Posterior vena cava (tissue), 2 donors: ENCODE measurements at regions of chr7 and their contacts with region 1.

Region 1: GRCh38 chr7:120987683-120988590 is 574 bp upstream of the CPED1 start:
- DNase-seq: peak; percentile 97

Region 2: DNA sequence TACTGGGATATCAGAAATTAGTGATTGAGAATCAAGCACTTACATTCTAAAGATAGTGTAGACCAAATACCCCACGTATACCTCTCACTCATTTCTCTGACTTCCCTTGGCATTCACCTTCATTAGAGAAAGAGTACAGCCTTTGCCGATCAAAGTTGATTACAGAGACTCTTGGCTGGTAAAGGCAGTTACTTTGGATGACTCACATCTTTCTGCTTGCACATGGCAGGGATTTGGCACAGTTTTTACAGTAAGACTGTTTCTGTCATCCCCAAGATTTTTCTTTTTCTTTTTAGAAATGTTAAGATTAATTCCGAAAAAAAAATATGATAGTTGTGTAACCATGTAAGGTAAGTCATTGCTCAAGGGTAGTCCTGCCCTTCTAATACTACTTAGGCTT is 273.0 kb before region 1 on chr7:
- intact Hi-C with region 1: no loop called
- DNase-seq: no peak

Region 3: DNA sequence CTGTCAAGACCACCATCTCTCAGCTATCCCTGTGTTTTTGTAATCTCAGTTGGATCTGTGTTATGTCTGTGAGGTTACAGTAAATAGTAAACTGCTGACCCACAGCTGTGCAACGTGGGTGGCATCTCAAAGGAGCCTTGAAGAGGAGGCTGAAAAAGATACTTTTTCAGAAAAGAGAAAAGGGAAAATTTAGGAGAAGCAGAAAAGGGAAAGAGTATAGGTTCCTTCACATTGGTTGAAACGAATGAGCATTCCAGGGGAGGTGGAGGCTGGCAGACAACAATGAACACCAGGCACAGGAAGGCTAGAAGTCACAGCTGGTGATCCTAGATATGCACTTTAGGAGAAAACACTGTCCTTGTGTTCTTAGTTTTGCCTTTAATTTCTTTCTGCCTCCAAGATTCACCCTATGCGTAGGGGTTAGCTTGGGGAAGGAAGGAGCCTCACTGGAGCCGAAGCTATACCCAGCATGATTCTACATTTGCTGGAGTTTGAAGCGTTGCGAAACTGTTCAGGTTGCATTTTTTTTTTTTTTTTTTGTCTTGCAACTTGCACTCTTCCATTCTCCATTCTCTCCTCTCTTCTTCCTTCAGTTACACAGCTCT is 18.9 kb after region 1 on chr7:
- intact Hi-C with region 1: loop called in 1 of 2 experiments (anchors 1 kb)
- DNase-seq: no peak

Region 4: DNA sequence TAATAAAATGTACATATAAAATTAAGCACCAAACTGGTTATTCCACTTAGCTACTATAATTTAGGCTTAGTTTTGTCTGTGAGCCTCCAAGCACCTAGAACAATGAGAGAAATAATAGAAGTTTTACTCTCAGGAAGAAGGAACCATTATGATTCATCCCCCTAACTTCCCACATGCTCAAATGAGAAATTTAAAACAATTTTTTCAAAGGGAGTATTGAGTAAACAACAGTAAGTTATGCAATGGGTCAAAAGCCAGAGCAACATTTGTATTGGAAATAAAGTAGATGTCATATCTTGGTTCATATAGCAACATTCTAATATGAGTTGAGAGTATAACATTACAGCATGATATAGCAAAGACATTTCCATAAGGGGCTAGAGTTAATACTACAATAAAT is 32.7 kb after region 1 on chr7:
- intact Hi-C with region 1: no loop called
- DNase-seq: no peak

Region 5: GRCh38 chr7:121081327-121081936 is 93.5 kb after region 1 on chr7:
- intact Hi-C with region 1: loop called (anchors 2 to 5 kb)
- DNase-seq: no peak

Region 6: GRCh38 chr7:121107923-121108498 is 120.1 kb after region 1 on chr7:
- intact Hi-C with region 1: loop called in 1 of 2 experiments (anchors 5 kb)
- DNase-seq: no peak